Activated CD8-positive, alpha-beta memory T cell treated with anti-CD3 and anti-CD28 coated beads, Interleukin-2, amount 10 ng/mL, durations not matched to agents 7 days and 5 days (primary cell): ENCODE measurements at regions of chr17 and their contacts with region 1.

Region 1: DNA sequence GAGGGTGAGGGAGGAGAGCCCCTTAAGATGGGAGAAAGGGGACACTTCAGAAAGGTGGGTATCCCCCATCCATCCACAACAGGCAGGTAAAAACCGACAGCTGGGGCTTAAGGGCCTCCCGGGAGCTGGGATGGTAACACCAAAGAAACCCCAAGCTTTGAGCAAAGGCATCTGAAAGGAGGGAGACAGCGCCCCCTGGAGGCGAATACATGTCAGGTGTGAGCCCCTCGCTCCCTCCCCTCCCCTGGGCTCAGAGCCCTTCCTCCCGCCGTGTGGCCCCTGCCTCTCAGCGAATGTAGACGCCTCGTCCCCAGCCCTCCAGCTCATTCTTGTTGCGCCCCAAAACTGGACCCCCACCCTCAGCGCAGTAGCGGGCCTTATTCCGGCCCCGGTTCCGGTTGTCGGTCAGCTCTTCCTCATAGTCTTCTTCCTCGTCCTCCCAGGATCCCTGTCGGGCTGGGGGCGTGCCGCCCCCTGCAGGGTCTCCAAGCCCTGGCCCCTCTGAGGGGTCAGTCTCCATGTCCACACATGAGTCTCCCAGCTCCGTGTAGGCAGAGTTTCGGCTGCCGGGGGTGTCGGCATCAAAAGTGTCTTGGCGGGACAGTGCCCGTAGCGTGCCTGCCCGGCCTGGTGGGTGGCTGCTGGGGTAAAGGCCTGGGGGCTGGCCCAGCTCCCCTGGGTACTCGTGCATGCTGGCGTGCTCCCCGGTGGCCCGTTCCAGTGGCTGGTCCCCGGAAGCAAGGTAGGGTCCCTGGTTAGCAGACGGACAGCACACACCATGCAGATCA is 9.1 kb upstream of the ARL5C start:
- DNase-seq: peak; percentile 84
- ATAC-seq: peak; percentile 85
- H3K4me3 Mint-ChIP-seq: no peak overlapping the region
- H3K27ac Mint-ChIP-seq: no peak overlapping the region
- H3K4me1 Mint-ChIP-seq: peaks cover 23% of the 10 kb centered on the region
- H3K27me3 Mint-ChIP-seq: no peaks in the 10 kb centered on the region

Region 2: GRCh38 chr17:39125143-39125875 is 49.8 kb before region 1 on chr17:
- CTCF ChIA-PET with region 1: no interaction called
- DNase-seq: no peak
- ATAC-seq: no peak
- H3K4me3 Mint-ChIP-seq: no peak overlapping the region
- H3K27ac Mint-ChIP-seq: no peak overlapping the region
- H3K4me1 Mint-ChIP-seq: no peaks in the 10 kb centered on the region
- H3K27me3 Mint-ChIP-seq: no peaks in the 10 kb centered on the region

Region 3: DNA sequence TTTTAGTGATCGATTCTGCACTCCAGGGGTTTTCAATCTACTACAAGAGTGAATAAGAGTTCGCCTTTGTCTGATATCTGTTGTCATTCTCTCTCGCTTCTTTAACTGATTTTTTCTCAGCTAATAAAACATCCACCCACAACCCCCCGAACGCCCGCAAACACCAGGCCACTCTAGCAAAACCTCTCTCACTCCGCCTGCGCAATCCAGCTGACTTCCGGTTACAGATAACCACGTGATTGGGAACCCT is 24.6 kb after region 1 on chr17:
- CTCF ChIA-PET with region 1: interaction called, 33 read pairs
- DNase-seq: peak; percentile 95
- ATAC-seq: peak; percentile 62
- H3K4me3 Mint-ChIP-seq: peak overlapping the region; percentile 89
- H3K27ac Mint-ChIP-seq: peak overlapping the region; percentile 99
- H3K4me1 Mint-ChIP-seq: peaks cover 57% of the 10 kb centered on the region
- H3K27me3 Mint-ChIP-seq: no peaks in the 10 kb centered on the region

Region 4: GRCh38 chr17:39209317-39210092 is 34.4 kb after region 1 on chr17:
- CTCF ChIA-PET with region 1: interaction called, 14 read pairs
- DNase-seq: peak; percentile 79
- ATAC-seq: peak; percentile 65
- H3K4me3 Mint-ChIP-seq: peak overlapping the region; percentile 9
- H3K27ac Mint-ChIP-seq: no peak overlapping the region
- H3K4me1 Mint-ChIP-seq: peaks cover 12% of the 10 kb centered on the region
- H3K27me3 Mint-ChIP-seq: peaks cover 22% of the 10 kb centered on the region

Region 5: DNA sequence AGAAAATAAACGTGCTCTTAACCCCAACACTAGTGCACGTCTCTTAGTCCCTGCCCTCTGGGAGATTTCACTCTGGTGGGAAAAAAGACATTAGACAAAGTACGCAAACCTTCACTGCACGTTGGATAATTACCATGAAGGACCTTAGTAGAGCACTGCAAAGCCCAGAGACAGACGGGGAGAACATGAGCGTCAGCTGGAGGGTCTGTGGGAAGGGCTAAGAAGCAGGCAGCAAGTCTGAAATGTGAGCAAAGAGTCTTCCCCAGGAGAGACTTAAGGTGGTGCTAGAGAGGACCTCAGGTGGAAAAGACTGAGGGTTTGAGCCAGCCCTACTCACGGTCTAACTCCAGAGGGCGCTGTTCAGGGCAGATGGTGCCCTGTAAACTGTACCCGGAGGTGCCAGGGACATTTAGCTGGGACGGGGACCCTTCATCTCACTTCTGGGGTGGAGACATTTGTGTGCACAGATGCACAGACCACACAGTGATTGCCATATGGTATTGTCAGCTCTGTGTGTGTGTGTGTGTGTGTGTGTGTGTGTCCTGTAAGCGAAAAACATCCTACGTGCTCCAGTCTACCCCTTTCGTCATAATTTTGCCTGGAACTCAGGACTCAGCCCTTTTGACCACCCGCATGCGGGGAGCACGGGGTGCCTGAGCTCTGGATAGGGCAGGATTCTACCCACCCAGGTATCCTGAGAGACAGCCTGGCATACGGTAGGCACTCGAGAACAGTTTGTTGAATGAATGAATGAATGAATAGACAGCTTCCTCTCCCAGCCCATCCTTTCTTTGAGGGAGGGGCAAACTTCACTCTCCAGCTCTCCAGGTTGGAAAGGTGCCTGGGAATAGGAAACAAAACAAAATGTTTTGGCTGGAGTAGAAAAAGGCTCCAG is 60.7 kb after region 1 on chr17:
- CTCF ChIA-PET with region 1: interaction called, 10 read pairs
- DNase-seq: peak; percentile 75
- ATAC-seq: peak; percentile 72
- H3K4me3 Mint-ChIP-seq: no peak overlapping the region
- H3K27ac Mint-ChIP-seq: no peak overlapping the region
- H3K4me1 Mint-ChIP-seq: peaks cover 25% of the 10 kb centered on the region
- H3K27me3 Mint-ChIP-seq: peaks cover 12% of the 10 kb centered on the region

Region 6: DNA sequence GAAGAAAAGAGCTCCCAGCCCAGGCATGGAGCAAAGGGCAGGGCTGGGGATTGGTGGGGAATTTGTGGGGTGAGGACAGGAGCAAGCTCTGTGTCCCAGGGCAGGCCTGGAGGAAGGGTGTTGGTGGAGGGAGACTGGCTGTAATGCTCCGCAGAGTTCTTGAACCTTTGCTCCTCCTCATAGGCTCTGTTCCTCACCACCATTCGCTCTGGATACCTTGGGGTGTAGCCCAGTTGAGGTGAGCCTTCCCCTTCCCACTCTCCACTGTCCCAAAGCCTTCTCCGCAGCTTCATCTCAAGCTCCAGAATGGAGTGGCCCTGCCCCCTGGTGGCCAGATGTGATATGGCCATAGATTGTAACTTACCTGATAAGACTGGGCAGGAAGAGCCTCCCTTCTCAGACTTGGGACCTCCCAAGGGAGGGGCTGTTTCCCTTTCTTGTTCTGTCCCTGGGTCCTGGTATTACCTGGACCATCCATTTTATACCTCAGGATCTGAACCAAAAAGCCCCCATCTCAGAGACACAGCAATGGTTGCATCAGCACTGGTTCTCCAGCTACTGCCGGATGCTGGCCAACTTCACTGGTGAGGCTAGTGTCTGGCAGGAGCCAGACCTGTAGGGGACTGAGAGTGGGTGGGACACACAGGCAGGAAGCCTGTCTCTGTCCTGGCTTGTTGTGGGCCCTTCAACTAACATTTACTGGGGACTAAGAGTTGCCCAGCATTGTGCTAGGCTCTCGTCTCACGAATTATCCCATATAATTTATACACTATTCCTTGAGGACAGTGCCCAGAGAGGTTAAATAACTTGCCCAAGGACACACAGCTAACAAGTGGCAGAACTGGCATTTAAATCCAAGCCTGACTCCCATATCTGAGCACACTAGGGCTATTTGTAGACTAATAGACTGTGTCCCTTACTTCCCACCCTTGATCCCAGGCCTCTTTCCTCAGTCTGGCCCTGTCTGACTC is 69.8 kb after region 1 on chr17:
- CTCF ChIA-PET with region 1: interaction called, 47 read pairs
- DNase-seq: peak; percentile 91
- ATAC-seq: peak; percentile 90
- H3K4me3 Mint-ChIP-seq: no peak overlapping the region
- H3K27ac Mint-ChIP-seq: no peak overlapping the region
- H3K4me1 Mint-ChIP-seq: peaks cover 13% of the 10 kb centered on the region
- H3K27me3 Mint-ChIP-seq: no peaks in the 10 kb centered on the region